ENCODE measurements at regions of chr19 and their contacts with region 1.

Region 1: GRCh38 chr19:40190891-40191835 is at the start of gene MAP3K10:
- DNase-seq: peak; percentile 61
- ATAC-seq: peak; percentile 84
- H3K4me3 ChIP-seq: peak within 1 kb of the TSS; percentile 95
- H3K27ac ChIP-seq: peak within 1 kb of the TSS; percentile 79
- H3K4me1 ChIP-seq: peaks cover 12% of the 10 kb centered on the region
- H3K27me3 ChIP-seq: no peaks in the 10 kb centered on the region
- CTCF ChIP-seq: no peak
- total RNA-seq, gene MAP3K10: 11.2 and 13.0 TPM in 2 replicates

Region 2: GRCh38 chr19:40210921-40211320 is 19.8 kb after region 1 on chr19:
- CTCF ChIA-PET with region 1: no interaction called
- POLR2A ChIA-PET with region 1: no interaction called
- intact Hi-C with region 1: no loop called
- DNase-seq: no peak
- ATAC-seq: no peak
- H3K4me3 ChIP-seq: no peak overlapping the region
- H3K27ac ChIP-seq: no peak overlapping the region
- H3K4me1 ChIP-seq: no peaks in the 10 kb centered on the region
- H3K27me3 ChIP-seq: no peaks in the 10 kb centered on the region
- CTCF ChIP-seq: no peak

Region 3: DNA sequence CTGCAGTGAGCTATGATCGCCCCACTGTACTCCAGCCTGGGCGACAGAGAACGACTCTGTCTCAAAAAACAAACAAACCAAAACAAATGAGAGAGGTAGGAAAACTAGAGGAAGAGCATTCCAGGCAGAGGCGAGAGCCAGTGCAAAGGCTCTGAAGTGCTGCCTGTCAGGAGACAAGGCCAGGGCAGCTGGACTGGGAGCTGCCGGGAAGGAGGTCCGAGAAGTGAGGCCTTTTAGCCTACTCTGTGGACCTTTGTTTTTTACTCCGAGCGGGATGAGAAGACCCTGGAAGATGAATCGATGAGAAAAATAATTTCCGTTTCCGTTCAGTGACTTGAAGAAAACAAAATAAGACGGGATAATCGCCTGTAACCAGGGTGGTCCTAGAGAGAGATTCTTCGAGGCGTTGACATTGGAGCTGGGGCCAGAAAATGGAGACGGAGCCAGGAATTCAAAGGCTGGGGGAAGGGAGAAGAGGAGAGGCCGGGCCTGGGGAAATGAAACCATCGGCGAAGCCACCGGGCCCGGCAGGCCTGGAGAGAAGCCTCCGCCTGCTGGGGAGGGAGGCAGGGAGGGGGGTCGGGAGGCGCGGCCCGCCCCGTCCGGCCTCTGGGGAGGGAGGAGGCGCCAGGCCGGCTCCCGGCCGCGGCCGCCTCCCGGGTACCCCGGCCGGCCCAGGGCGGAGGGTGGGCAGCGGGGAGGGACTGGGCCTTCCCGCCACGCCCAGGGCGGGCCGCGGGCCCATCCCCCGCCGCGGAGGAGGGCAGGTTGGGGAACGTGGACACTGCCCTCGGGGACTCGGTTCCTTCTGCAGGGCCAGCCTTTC is 242.4 kb after region 1 on chr19:
- CTCF ChIA-PET with region 1: interaction called, 10 read pairs
- POLR2A ChIA-PET with region 1: no interaction called
- intact Hi-C with region 1: no loop called
- DNase-seq: peak; percentile 89
- ATAC-seq: peak; percentile 93
- H3K4me3 ChIP-seq: peak overlapping the region; percentile 73
- H3K27ac ChIP-seq: peak overlapping the region; percentile 94
- H3K4me1 ChIP-seq: peaks cover 16% of the 10 kb centered on the region; the same call in 1 of the 2 replicates
- H3K27me3 ChIP-seq: no peaks in the 10 kb centered on the region
- CTCF ChIP-seq: no peak

Region 4: DNA sequence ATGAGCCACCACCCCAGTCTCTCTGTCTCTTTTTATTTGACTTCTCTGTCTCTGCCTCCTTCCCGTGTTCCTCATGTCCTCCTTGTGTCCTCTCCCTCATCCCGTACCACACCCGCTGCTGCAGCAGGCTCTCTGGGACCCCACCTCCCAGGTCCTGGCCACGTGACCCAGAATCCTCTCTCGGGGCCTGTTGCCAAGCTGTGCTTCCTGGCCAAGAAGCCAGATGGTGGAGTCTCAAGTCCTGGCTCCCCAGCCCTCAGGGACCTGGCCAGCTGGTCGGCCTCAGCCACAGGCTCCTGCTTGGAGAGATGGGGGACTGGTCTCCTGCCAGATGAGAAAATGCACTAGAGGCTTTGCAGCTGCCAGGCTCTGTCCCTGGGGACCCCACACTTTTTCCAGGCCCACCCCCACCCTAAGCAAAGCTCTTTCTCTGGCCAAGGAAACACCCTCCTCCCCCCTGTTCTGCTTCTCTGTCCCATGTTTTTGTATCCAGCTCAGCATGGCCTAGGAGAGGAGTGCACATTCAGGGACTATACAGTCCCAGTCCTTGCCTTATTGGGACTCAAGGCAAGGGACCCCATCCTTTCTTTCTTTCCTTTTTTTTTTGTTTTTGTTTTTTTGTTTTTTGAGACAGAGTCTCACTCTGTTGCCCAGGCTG is 351.2 kb after region 1 on chr19:
- CTCF ChIA-PET with region 1: no interaction called
- POLR2A ChIA-PET with region 1: interaction called, 19 read pairs
- intact Hi-C with region 1: no loop called
- DNase-seq: no peak
- ATAC-seq: no peak
- H3K4me3 ChIP-seq: no peak overlapping the region
- H3K27ac ChIP-seq: no peak overlapping the region
- H3K4me1 ChIP-seq: no peaks in the 10 kb centered on the region
- H3K27me3 ChIP-seq: no peaks in the 10 kb centered on the region
- CTCF ChIP-seq: no peak

Measured in PC-3 (cell line).